ENCODE measurements at regions of chr1 and their contacts with region 1.

Region 1: DNA sequence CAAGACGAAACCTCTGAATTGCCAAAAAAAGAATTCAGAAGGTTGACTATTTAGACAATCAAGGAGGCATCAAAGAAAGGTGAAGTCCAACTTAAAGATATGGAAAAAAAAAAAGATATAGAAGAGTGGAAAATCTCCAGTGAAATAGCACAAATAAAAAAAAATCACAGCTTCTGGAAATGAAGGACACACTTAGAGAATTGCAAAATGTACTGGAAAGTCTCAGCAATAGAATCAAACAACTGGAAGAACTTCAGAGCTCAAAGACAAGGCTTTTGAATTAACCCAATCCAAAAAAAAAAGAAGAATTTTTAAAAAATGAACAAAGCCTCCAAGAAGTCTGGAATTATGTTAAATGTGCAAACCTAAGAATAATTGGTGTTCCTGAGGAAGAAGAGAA is 31.8 kb downstream of the CD2 start:
- DNase-seq: no peak
- H3K4me3 Mint-ChIP-seq: no peak overlapping the region
- H3K27ac Mint-ChIP-seq: no peak overlapping the region
- H3K4me1 Mint-ChIP-seq: peaks cover 28% of the 10 kb centered on the region
- H3K27me3 Mint-ChIP-seq: no peaks in the 10 kb centered on the region

Region 2: GRCh38 chr1:116243333-116244054 is 542.6 kb before region 1 on chr1:
- intact Hi-C with region 1: no loop called
- DNase-seq: no peak
- H3K4me3 Mint-ChIP-seq: no peak overlapping the region
- H3K27ac Mint-ChIP-seq: no peak overlapping the region
- H3K4me1 Mint-ChIP-seq: no peaks in the 10 kb centered on the region
- H3K27me3 Mint-ChIP-seq: peaks cover 3% of the 10 kb centered on the region

Region 3: GRCh38 chr1:116806245-116806644 is 20.2 kb after region 1 on chr1:
- intact Hi-C with region 1: loop called (anchors 2 kb)
- DNase-seq: peak; percentile 36
- H3K4me3 Mint-ChIP-seq: peak overlapping the region; percentile 79
- H3K27ac Mint-ChIP-seq: peak overlapping the region; percentile 90
- H3K4me1 Mint-ChIP-seq: peaks cover 84% of the 10 kb centered on the region
- H3K27me3 Mint-ChIP-seq: no peaks in the 10 kb centered on the region